ENCODE measurements at regions of chr6 and their contacts with region 1.

Region 1: GRCh38 chr6:122839477-122839876 is 50.4 kb downstream of the SMPDL3A start:
- DNase-seq: peak in 7 of 9 donors; percentile 18 to 47 (median 36)
- ATAC-seq: peak; percentile 79
- H3K4me3 ChIP-seq: no peak overlapping the region
- H3K4me3 Mint-ChIP-seq: no peak overlapping the region
- H3K27ac ChIP-seq: no peak overlapping the region
- H3K27ac Mint-ChIP-seq: no peak overlapping the region
- H3K4me1 ChIP-seq: no peaks in the 10 kb centered on the region
- H3K4me1 Mint-ChIP-seq: no peaks in the 10 kb centered on the region
- H3K27me3 ChIP-seq: no peaks in the 10 kb centered on the region
- H3K27me3 Mint-ChIP-seq: peaks cover 2 to 26% (median 9%) of the 10 kb centered on the region in 5 donors

Region 2: DNA sequence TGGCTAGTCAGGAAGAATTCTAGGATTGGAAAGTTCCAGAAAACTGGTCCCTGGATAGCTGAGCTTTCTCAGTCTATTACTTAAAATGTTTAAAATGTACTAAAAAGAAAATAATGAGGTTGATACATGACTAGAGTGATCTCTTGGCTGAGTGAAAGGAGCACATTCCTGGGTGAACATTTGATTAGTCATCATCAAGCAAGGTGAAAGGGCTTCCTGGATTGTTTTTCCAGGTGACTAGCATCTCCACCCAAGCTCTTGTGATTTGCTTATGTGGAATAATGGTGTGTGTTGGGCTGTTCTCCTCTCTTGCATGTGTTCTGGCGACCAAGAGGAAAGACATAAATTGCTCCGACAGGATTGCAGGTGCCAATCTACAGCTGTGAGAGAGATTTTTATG is 186.4 kb before region 1 on chr6:
- CTCF ChIA-PET with region 1: no interaction called
- POLR2A ChIA-PET with region 1: no interaction called
- intact Hi-C with region 1: no loop called
- DNase-seq: no peak
- ATAC-seq: no peak
- H3K4me3 ChIP-seq: no peak overlapping the region
- H3K4me3 Mint-ChIP-seq: no peak overlapping the region
- H3K27ac ChIP-seq: no peak overlapping the region
- H3K27ac Mint-ChIP-seq: no peak overlapping the region
- H3K4me1 ChIP-seq: no peaks in the 10 kb centered on the region
- H3K4me1 Mint-ChIP-seq: no peaks in the 10 kb centered on the region
- H3K27me3 ChIP-seq: no peaks in the 10 kb centered on the region
- H3K27me3 Mint-ChIP-seq: peaks cover 0 to 12% (median 0%) of the 10 kb centered on the region in 5 donors

Region 3: DNA sequence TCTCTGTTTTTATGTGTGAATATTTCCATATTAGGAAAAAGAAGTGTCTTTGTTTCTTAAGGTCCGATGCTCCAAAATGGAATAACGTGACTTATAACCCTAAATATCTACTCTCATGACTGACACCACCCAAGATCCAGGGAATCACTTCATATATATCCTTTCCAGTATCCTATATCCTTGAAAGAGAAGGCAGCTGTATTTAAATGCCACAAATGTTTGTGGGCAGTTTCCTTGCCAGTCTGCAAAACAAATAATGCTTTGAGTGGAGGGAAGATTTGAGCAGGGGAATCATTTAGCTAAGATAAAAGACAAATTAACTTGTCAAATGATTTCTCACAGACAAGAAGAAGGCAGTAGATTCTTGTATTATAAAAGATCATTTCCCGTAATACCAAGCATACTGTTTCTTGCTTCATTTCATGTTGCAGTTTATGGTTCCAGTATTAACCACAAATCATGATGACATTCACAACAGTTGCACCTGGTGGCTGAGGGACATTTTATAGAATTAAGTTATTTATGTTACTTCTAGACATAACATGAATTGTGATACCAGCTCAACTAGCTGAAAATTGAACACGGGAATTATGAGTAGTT is 89.9 kb before region 1 on chr6:
- CTCF ChIA-PET with region 1: no interaction called
- POLR2A ChIA-PET with region 1: no interaction called
- intact Hi-C with region 1: loop called in 1 of 2 experiments (anchors 1 kb)
- DNase-seq: no peak
- ATAC-seq: no peak
- H3K4me3 ChIP-seq: no peak overlapping the region
- H3K4me3 Mint-ChIP-seq: no peak overlapping the region
- H3K27ac ChIP-seq: no peak overlapping the region
- H3K27ac Mint-ChIP-seq: no peak overlapping the region
- H3K4me1 ChIP-seq: peaks cover 0 to 8% of the 10 kb centered on the region in 2 donors
- H3K4me1 Mint-ChIP-seq: peaks cover 14 to 33% (median 22%) of the 10 kb centered on the region in 7 donors
- H3K27me3 ChIP-seq: no peaks in the 10 kb centered on the region
- H3K27me3 Mint-ChIP-seq: no peaks in the 10 kb centered on the region

Region 4: DNA sequence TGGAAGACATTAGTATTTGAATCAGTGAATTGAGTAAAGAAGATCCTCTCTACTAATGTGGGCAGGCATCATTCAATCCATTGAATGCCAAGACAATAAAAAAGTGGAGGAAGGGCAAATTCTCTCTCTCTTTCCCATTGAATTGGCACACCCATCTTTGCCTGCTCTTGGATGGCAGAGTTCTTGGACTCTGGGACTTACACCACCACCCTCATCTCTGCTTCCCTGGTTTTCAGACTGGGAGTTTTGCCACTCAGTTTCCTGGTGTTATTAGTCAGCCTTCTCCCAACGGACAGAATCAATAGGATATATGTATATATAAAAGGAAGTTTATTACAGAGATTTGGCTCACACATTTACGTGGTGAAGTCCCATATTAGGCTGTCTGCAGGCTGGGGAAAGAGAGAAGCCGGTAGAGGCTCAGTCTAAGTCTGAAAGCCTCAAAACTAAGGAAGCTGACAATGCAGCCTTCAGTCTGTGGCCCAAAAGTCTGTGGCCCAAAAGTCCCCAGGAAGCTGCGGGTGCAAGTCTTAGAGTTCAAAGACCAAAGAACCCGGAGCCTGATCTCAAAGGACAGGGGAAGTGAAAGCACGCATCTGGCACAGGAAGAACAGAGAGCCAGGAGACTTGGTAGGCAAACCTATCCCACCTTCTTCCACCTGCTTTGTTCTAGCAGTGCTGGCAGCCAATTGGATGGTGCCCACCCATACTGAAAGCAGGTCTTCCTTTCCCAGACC is 13.9 kb after region 1 on chr6:
- CTCF ChIA-PET with region 1: no interaction called
- POLR2A ChIA-PET with region 1: no interaction called
- intact Hi-C with region 1: no loop called
- DNase-seq: no peak
- ATAC-seq: peak; percentile 18
- H3K4me3 ChIP-seq: no peak overlapping the region
- H3K4me3 Mint-ChIP-seq: no peak overlapping the region
- H3K27ac ChIP-seq: no peak overlapping the region
- H3K27ac Mint-ChIP-seq: no peak overlapping the region
- H3K4me1 ChIP-seq: no peaks in the 10 kb centered on the region
- H3K4me1 Mint-ChIP-seq: no peaks in the 10 kb centered on the region
- H3K27me3 ChIP-seq: no peaks in the 10 kb centered on the region
- H3K27me3 Mint-ChIP-seq: peaks cover 0 to 30% (median 10%) of the 10 kb centered on the region in 5 donors